H1 (cell line): ENCODE measurements at regions of chr6 and their contacts with region 1.

Region 1: DNA sequence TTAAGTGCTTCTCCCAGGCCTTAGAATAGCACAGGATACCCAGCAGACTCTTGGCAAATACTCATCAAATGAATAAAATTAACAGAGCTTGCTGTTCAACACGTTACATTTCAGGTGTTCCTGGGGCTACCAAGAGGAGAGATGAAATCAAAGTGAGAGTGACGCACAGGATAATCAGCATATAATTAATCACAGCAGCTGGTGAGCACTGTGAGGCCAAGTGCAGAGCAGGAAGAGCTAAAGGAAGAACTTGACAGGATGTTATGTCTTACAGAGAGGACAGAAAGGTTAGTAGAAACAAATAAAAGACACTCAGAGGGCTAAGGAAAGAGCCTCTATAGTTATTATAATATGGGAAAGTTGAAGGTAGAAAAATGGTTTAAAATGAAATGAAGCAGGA is 8.8 kb downstream of the PPIL1 start:
- DNase-seq: no peak
- H3K4me3 ChIP-seq: no peak overlapping the region
- H3K27ac ChIP-seq: no peak overlapping the region
- H3K4me1 ChIP-seq: no peaks in the 10 kb centered on the region
- H3K27me3 ChIP-seq: no peaks in the 10 kb centered on the region
- CTCF ChIP-seq: no peak
- EP300 ChIP-seq: no peak
- POLR2A ChIP-seq: no peak
- RAD21 ChIP-seq: no peak

Region 2: DNA sequence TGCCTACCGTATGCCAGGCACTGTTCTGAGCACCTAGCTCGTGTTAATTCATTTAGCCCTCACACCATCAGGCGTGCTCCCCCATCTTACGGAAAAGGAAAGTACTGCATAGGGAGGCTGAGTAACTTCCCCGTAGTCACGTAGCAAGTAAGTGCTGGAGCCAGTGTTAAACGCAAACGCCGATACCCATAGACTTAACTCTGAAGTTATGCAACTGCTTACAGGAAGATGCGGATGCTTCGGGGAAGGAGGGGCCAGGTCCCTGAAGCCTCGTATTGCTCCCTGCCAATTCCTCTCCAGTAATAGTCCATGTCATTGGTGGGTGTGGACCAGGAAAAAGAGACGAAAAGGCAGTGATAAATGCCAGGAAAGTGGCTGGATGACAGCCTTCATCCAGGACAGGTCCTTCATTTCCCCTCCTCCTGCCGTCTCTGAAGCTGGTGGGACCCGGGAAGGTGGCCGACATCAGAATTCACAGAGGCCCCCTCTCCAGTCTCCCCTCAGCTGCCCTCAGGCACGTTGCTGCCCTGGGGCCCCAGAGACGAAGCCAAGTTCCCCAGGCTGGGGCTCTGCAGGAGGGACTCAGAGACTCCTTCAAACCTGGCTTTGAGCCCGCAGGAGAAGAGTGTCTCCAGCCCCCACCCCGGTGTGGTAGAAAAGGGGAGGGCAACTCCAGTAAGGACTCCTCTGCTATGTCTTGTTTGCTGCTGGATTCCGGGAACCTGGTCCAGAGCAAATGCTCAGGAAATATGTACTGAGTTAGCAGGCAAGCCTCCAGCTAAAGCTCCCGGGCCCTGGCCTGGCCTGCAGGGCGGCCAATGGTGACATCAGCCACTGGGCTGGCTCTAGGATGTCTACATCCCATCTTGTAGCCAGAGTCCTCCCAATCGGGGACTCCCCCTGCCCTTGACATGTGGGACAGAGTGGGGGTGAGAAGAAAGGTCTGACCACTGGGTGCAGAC is 130.4 kb before region 1 on chr6:
- CTCF ChIA-PET with region 1: no interaction called
- POLR2A ChIA-PET with region 1: no interaction called
- DNase-seq: no peak
- H3K4me3 ChIP-seq: no peak overlapping the region
- H3K27ac ChIP-seq: no peak overlapping the region
- H3K4me1 ChIP-seq: peaks cover 2 to 11% (median 6%) of the 10 kb centered on the region in 4 experiments; a peak in 5 of 7 replicates
- H3K27me3 ChIP-seq: no peaks in the 10 kb centered on the region; a peak in 1 of 7 replicates
- CTCF ChIP-seq: no peak
- EP300 ChIP-seq: no peak
- POLR2A ChIP-seq: no peak
- RAD21 ChIP-seq: no peak

Region 3: DNA sequence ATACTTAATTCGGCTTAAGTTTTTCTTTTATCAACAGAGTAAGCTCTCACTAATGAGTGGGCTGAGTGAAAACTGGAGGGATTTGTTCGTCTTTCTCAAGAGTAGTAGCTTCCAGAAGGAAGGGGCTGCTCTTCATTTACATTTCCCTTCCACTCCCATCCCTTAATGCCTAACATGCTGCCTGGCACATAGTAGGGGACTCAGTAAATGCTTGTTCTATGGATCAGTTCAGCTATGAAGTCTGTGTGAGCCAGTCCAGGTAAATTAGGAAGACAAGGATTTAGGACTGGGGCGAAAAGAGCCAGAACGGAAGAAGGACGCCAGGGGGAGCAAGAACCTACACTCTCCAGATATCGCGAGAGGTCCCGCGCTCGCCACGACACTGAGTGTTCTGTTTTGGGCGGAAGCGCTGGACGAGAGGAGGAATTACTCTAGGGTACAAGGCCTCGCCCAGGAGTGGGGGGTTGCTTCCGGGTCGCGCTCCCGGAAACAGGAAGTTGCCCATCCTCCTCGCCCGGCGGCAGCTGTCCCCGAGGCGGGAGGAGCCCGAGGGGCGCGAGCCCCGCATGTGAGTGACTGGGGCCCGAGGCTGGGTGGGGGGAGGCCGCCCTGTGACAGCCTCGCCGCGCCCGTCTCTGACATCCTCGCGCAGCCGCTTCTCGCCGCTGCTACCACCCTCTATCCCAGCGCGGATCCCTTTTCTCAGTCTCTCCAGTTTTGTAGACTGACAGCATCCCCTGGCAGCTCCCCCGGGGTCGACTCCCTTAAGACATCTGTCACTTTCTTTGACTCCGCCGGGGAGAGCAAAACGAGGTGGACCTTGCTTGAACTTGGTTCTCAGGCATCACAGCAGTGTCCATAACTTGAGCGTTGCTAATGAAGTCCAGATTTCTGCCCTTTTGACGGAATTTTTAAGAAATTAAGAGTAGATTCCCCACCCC is 19.9 kb after region 1 on chr6 and contains the start of gene C6orf89:
- CTCF ChIA-PET with region 1: interaction called, 51 read pairs
- POLR2A ChIA-PET with region 1: no interaction called
- DNase-seq: peak; percentile 95 to 97
- H3K4me3 ChIP-seq: peak within 1 kb of the TSS; percentile 47 to 81 (median 70)
- H3K27ac ChIP-seq: peak within 1 kb of the TSS; percentile 24; the same call in 1 of the 2 replicates
- H3K4me1 ChIP-seq: no peaks in the 10 kb centered on the region; a peak in 1 of 7 replicates
- H3K27me3 ChIP-seq: no peaks in the 10 kb centered on the region
- CTCF ChIP-seq: peak; percentile 72 to 87 (median 82)
- EP300 ChIP-seq: 0 out of 3 replicates have a peak, but pooled peaks of 1 of the 2 experiments have one; percentile 10
- POLR2A ChIP-seq: no peak
- RAD21 ChIP-seq: peak; percentile 32 to 47; a peak in 3 of 4 replicates
- total RNA-seq, gene C6orf89: 11.6 and 12.3 TPM in 2 replicates

Region 4: DNA sequence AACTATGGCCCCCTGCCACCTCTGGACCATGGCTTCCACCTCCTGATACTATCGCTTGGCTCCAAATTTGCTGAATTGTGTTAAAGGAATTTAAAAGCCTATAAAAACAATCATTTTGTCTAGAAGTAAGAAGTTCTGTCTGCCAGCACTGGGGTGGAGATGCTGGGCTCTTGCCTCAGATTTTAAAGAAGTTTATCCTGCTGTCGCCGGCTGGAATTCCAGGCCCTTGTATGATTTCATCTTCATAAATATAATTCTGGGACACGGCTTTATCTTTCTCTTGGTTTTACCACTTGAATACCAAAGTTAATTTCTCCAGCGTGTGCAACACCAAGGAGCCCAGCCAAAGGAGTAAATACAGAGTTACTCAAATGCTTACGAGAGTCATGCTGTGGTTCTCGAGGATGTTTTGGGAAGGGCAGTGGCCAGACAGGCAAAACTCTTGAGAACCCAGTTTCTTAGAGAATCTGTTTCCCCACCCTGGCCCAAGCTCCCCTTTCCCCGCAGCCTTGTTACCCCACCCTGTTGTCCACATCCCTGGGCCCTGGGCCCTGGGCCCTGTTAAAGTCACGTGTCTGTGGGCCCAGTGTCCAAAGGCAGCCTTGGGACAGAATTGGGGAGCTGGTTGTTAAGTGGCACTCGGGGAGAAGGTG is 51.8 kb after region 1 on chr6:
- CTCF ChIA-PET with region 1: no interaction called
- POLR2A ChIA-PET with region 1: no interaction called
- DNase-seq: no peak
- H3K4me3 ChIP-seq: no peak overlapping the region
- H3K27ac ChIP-seq: no peak overlapping the region
- H3K4me1 ChIP-seq: no peaks in the 10 kb centered on the region; a peak in 1 of 7 replicates
- H3K27me3 ChIP-seq: no peaks in the 10 kb centered on the region
- CTCF ChIP-seq: no peak
- EP300 ChIP-seq: no peak
- POLR2A ChIP-seq: no peak
- RAD21 ChIP-seq: no peak